Naive thymus-derived CD4-positive, alpha-beta T cell (primary cell): ENCODE measurements at regions of chr12 and their contacts with region 1.

Region 1: DNA sequence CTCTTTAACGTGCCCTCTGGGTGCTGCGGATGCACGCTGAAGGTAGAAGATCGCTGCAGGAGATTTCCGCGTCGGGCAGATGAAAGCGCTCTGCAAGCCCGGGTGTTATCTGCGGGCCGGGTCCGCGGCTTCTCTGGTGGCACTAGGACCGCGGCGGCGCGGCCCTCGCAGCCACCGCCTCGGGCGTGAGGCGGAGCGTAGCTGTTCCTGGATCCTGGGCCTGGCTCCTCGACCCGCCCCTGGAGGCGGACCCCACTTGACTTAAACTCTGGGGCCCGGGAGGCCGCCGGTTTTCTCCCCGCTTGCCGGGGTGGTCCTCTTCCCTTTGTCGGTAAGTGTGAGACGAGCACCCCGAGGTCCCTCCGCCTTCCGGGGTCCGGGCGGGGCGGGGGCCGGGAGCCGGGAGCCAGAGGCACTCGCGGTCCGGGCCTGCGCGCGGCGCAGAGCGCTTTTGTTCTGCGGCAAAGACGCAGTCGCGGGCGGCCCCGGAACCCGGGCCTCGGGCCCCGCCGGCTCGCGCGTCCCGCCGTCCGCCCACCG is at the start of gene RESF1:
- DNase-seq: peak; percentile 67 to 89 (median 85)
- ATAC-seq: peak; percentile 88
- H3K4me3 ChIP-seq: peak within 1 kb of the TSS; percentile 91
- H3K4me3 Mint-ChIP-seq: peak within 1 kb of the TSS; percentile 91 to 97 (median 94)
- H3K27ac ChIP-seq: peak within 1 kb of the TSS; percentile 86
- H3K27ac Mint-ChIP-seq: peak within 1 kb of the TSS; percentile 91 to 98 (median 96)
- H3K4me1 ChIP-seq: peaks cover 23 to 49% of the 10 kb centered on the region in 2 donors
- H3K4me1 Mint-ChIP-seq: peaks cover 43 to 74% (median 57%) of the 10 kb centered on the region in 7 donors
- H3K27me3 ChIP-seq: no peaks in the 10 kb centered on the region
- H3K27me3 Mint-ChIP-seq: no peaks in the 10 kb centered on the region
- total RNA-seq, gene RESF1: 141 to 490 (median 161) TPM

Region 2: GRCh38 chr12:31728917-31729640 is 230.2 kb before region 1 on chr12 and contains the start of gene AMN1:
- CTCF ChIA-PET with region 1: interaction called, 3 read pairs
- POLR2A ChIA-PET with region 1: interaction called, 52 read pairs
- intact Hi-C with region 1: loop called (anchors 1 kb)
- DNase-seq: peak; percentile 94 to 100 (median 95)
- ATAC-seq: peak; percentile 94
- H3K4me3 ChIP-seq: peak within 1 kb of the TSS; percentile 84
- H3K4me3 Mint-ChIP-seq: peak within 1 kb of the TSS; percentile 94 to 100 (median 98)
- H3K27ac ChIP-seq: peak within 1 kb of the TSS; percentile 86
- H3K27ac Mint-ChIP-seq: peak within 1 kb of the TSS; percentile 96 to 100 (median 99)
- H3K4me1 ChIP-seq: peaks cover 8 to 18% of the 10 kb centered on the region in 2 donors
- H3K4me1 Mint-ChIP-seq: peaks cover 26 to 79% (median 61%) of the 10 kb centered on the region in 7 donors
- H3K27me3 ChIP-seq: no peaks in the 10 kb centered on the region
- H3K27me3 Mint-ChIP-seq: peaks cover 0 to 2% (median 0%) of the 10 kb centered on the region in 5 donors
- total RNA-seq, gene AMN1: 4.1 to 22.9 (median 8.1) TPM

Region 3: DNA sequence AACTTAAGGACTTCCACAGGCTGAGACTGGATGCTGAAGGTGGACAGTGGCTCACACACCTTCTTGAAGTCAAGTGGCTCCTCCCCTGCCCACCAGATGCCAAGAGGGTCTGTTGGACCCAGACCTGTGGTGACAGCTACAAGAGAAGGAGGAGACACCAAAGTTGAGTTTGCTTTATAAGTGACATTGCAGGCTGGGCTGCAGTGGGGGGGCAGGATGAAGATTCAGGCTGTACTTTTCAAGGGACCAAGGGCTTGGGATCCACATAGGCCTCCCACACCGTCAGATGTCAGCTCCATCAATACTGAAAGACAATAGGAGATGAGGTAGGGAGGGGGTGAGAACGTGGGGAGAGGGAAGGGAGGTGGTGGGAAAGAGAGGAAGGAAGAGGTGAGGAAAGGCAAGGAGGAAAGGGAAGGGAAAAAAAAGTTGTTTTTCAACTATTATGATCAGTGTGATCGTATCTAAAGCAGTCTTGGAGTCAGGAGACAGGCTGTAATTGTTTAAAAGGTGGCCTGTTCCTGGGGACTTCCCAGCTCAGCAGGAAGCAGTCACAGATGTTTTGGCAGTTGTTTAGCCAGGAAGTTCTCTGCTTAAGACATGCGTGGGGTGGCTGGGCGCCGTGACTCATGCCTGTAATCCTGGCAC is 84.1 kb before region 1 on chr12:
- CTCF ChIA-PET with region 1: interaction called, 4 read pairs
- POLR2A ChIA-PET with region 1: interaction called, 14 read pairs
- intact Hi-C with region 1: loop called (anchors 1 kb)
- DNase-seq: peak; percentile 17 to 84 (median 63)
- ATAC-seq: peak; percentile 96
- H3K4me3 ChIP-seq: no peak overlapping the region
- H3K4me3 Mint-ChIP-seq: peak overlapping the region; percentile 53 to 84 (median 72)
- H3K27ac ChIP-seq: peak overlapping the region; percentile 90
- H3K27ac Mint-ChIP-seq: peak overlapping the region; percentile 95 to 100 (median 98)
- H3K4me1 ChIP-seq: peaks cover 12 to 29% of the 10 kb centered on the region in 2 donors
- H3K4me1 Mint-ChIP-seq: peaks cover 29 to 66% (median 55%) of the 10 kb centered on the region in 7 donors
- H3K27me3 ChIP-seq: no peaks in the 10 kb centered on the region
- H3K27me3 Mint-ChIP-seq: no peaks in the 10 kb centered on the region

Region 4: DNA sequence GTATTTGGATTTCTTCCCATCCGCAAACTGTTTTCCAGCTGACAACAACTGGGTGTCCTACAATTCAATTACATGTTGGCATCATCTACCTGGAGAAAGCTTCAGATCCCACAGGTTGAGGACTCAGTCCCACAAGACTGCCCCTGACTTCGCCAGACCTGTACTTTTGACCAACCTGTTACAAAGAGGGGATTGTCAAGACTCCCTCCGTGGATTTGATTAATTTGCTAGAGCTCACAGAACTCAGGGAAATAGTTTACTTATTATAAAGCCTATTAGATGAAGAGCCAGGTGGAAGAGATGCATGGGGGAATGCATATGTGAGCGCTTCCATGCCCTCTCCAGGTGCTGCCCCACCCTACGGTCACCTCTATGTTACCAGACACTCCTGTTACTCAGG is 14.6 kb after region 1 on chr12:
- CTCF ChIA-PET with region 1: interaction called, 5 read pairs
- POLR2A ChIA-PET with region 1: interaction called, 59 read pairs
- intact Hi-C with region 1: no loop called
- DNase-seq: no peak
- ATAC-seq: no peak
- H3K4me3 ChIP-seq: no peak overlapping the region
- H3K4me3 Mint-ChIP-seq: peak overlapping the region in 3 of 10 donors; percentile 2 to 45 (median 10)
- H3K27ac ChIP-seq: no peak overlapping the region
- H3K27ac Mint-ChIP-seq: peak overlapping the region in 2 of 9 donors; percentile 12 to 43
- H3K4me1 ChIP-seq: peaks cover 9 to 29% of the 10 kb centered on the region in 2 donors
- H3K4me1 Mint-ChIP-seq: peaks cover 9 to 41% (median 25%) of the 10 kb centered on the region in 7 donors
- H3K27me3 ChIP-seq: no peaks in the 10 kb centered on the region
- H3K27me3 Mint-ChIP-seq: no peaks in the 10 kb centered on the region

Region 5: DNA sequence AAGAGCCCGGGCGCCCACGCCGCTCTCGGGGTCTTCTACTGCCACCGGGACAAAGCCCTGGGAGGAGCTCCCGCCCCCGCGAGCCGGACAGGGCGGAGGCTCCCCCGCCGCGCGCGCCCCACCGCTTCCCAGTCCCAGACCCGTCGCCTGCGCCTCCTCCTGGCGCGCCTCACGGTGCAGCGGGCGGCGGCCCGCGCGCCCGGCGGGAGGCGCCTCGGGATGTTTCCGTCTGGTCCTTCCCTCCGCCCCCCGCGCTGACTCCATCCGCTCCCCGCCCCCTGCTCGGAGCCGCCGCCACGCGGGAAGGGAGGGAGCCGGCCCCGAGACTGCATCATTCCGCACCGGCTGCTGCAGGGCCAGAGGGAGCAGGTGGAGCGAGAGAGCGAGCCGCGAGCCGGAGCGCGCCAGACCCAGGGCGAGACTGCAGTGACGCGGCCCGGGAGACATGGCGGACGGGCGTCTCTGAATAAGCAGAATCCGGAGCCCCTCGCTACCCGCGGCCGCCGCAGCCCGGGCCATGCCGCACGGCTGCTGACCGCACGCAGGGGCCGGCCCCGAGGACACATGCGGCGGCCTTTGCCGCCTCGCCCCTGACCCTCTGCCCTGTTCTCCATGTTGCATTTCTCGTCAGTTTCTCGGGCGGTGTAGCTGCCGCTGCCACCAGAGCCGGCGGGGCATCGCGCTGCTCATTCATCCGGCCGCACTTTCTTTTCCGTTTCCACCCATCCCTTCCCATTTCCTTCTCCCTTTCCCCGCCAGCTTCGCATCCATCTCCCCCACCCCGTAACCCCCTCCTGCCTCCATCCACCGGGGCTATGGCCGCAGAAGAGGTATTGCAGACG is 147.5 kb after region 1 on chr12 and contains the start of gene BICD1:
- CTCF ChIA-PET with region 1: no interaction called
- POLR2A ChIA-PET with region 1: no interaction called
- intact Hi-C with region 1: loop called (anchors 1 kb)
- DNase-seq: peak; percentile 43 to 84 (median 65)
- ATAC-seq: peak; percentile 90
- H3K4me3 ChIP-seq: peak within 1 kb of the TSS; percentile 90
- H3K4me3 Mint-ChIP-seq: peak within 1 kb of the TSS; percentile 82 to 98 (median 96)
- H3K27ac ChIP-seq: peak within 1 kb of the TSS; percentile 67
- H3K27ac Mint-ChIP-seq: peak within 1 kb of the TSS; percentile 77 to 94 (median 91)
- H3K4me1 ChIP-seq: peaks cover 19 to 22% of the 10 kb centered on the region in 2 donors
- H3K4me1 Mint-ChIP-seq: peaks cover 11 to 42% (median 33%) of the 10 kb centered on the region in 7 donors
- H3K27me3 ChIP-seq: no peaks in the 10 kb centered on the region
- H3K27me3 Mint-ChIP-seq: peaks cover 0 to 13% (median 0%) of the 10 kb centered on the region in 5 donors
- total RNA-seq, gene BICD1: 16.7 to 25.1 (median 18.5) TPM